ENCODE measurements at regions of chr11 and their contacts with region 1.

Region 1: DNA sequence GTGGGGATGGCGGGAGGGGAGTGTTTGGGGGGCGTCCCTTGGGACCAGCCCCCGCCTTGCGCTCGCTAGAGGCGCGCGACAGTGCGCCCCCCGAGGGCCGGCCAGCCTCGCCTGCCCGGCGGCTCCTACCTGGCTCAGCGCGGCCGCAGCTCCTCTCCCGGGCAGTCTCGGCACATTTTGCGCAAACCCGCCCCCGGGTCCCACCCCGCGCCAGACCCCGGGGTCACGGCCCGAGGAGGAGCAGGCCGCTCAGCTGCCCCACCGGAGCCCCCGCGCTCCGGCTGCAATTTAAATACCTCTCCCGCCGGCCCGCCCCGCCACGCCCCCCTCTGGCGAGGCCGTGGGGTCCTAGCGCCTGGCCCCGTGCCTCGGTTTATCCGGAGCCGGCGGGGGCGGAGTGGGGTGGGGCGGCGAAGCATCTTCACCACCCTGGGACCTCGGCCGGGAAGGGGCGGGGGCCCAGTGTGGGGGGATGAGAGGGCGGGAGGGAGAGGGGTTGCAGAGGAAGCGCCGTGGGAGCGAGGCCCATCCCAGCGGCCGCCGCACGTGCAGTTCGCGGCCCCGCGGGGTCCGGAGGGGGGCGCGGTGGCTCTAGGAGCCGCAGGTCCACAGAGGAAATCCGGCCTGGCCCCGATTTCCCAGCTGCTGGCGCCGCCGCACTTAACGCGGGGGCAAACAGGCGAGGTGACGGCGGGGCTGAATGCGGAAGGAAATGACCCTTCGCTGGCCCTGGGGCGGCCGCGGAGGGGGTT is at the start of gene LRRC32:
- DNase-seq: no peak
- H3K4me3 ChIP-seq: peak within 1 kb of the TSS; percentile 59 to 74 (median 64)
- H3K27ac ChIP-seq: peak within 1 kb of the TSS; percentile 62 to 83 (median 79)
- H3K4me1 ChIP-seq: peaks cover 36 to 58% (median 48%) of the 10 kb centered on the region in 4 donors
- H3K27me3 ChIP-seq: peaks cover 0 to 30% (median 4%) of the 10 kb centered on the region in 4 donors
- CTCF ChIP-seq: peak in 1 of 3 experiments; percentile 17
- EP300 ChIP-seq: no peak
- POLR2A ChIP-seq: no peak
- total RNA-seq, gene LRRC32: 19.1 to 87.5 (median 45.3) TPM

Region 2: GRCh38 chr11:76602431-76602861 is 68.2 kb before region 1 on chr11:
- intact Hi-C with region 1: loop called (anchors 10 kb)
- DNase-seq: peak; percentile 92
- H3K4me3 ChIP-seq: no peak overlapping the region
- H3K27ac ChIP-seq: peak overlapping the region; percentile 41 to 62 (median 52)
- H3K4me1 ChIP-seq: peaks cover 48 to 54% (median 50%) of the 10 kb centered on the region in 4 donors
- H3K27me3 ChIP-seq: no peaks in the 10 kb centered on the region
- CTCF ChIP-seq: no peak
- EP300 ChIP-seq: no peak
- POLR2A ChIP-seq: no peak

Region 3: DNA sequence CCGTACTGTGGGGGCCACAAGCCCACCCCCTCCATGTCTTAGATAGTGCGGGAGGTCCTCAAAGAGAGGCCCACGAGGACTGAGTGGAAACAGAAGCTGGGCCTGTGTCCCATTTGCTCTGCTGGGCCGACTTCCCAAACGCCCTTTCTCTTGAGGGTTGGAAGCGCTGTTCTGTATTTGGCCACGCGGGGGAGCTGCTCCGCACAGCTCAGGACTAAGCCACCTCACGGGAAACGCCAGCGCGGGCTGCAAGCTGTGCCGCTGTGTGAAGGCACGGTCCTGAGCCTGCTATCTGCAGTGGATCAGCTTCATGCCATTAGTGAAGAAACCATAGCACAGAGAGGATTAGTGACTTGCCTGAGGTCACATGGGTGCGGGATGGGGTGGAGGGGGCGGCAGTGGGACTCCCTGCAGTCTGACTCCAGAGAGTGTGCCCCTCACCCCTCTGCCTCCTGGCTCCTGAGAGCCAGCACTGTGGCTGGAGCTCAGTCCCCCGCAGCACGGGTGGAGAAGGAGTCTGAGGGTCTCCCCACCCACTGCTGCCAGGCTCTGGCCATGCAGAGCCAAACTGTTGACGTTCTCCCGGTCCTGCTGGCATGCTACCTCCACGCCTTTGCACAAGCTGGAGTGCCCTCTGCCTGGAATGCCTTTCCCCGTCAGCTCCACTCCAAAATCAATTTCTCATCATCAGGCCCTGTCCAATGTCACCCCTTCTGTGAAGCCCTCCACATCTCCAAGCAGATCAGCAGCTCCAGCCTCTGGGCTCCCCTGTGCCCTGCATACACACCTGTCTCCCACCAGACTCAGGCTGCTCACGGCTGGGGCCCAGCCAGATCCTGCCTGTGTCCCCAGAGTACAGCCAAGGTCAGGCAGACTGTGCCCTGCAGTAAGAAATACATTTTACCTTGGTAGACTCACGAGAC is 51.4 kb after region 1 on chr11:
- intact Hi-C with region 1: no loop called
- DNase-seq: peak; percentile 97
- H3K4me3 ChIP-seq: peak overlapping the region in 3 of 4 donors; percentile 17 to 29 (median 24)
- H3K27ac ChIP-seq: no peak overlapping the region
- H3K4me1 ChIP-seq: peaks cover 7 to 12% (median 10%) of the 10 kb centered on the region in 4 donors
- H3K27me3 ChIP-seq: peaks cover 0 to 28% (median 0%) of the 10 kb centered on the region in 4 donors
- CTCF ChIP-seq: peak; percentile 81 to 97 (median 84)
- EP300 ChIP-seq: no peak
- POLR2A ChIP-seq: no peak

Region 4: DNA sequence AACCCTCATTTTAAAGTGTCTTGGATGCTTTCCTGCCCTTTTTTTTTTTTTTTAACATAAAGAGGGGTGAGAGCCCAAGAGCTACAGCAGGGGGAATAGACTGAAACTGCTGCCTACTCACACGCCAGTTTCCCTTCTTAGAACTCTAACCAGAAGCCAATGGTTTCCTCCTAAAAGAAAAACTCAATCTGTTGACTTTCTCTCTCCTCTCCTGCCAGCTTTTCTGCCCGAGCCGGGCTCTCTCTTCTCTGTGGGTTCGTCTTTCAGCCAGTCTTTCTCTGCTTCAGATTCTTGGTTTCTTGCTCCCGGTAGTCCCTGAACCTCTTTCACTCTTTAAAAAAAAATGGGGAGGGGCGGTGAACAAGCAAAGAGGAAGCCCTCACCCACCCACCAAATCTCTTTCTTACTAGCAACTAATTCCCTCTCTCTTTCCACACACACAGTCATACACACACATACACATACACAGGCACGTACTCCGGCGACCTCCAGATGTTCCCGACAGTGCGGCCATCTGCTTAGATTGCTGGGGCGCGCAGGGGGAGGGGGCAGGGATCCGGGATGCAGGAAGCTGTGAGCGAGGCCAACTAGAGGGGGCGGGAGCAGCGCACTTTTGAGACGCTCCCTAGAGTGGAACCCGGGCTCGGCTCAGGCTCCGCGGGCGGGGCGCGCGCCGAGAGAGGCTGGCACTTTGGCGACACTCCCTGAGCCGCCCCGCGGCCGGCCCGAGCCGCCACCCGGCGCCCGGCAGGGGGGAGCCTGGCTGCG is 112.0 kb after region 1 on chr11:
- intact Hi-C with region 1: no loop called
- DNase-seq: peak; percentile 98
- H3K4me3 ChIP-seq: peak overlapping the region; percentile 81 to 92 (median 82)
- H3K27ac ChIP-seq: peak overlapping the region; percentile 86 to 94 (median 89)
- H3K4me1 ChIP-seq: peaks cover 19 to 62% (median 52%) of the 10 kb centered on the region in 4 donors
- H3K27me3 ChIP-seq: no peaks in the 10 kb centered on the region
- CTCF ChIP-seq: no peak
- EP300 ChIP-seq: no peak
- POLR2A ChIP-seq: peak; percentile 26

Region 5: GRCh38 chr11:77047007-77047927 is 376.6 kb after region 1 on chr11:
- intact Hi-C with region 1: no loop called
- DNase-seq: no peak
- H3K4me3 ChIP-seq: peak overlapping the region; percentile 39 to 51 (median 45)
- H3K27ac ChIP-seq: peak overlapping the region in 1 of 4 donors; percentile 54
- H3K4me1 ChIP-seq: peaks cover 0 to 13% (median 11%) of the 10 kb centered on the region in 4 donors
- H3K27me3 ChIP-seq: peaks cover 0 to 33% (median 11%) of the 10 kb centered on the region in 4 donors
- CTCF ChIP-seq: peak; percentile 73 to 81 (median 75)
- EP300 ChIP-seq: no peak
- POLR2A ChIP-seq: no peak

Measured in esophagus muscularis mucosa (tissue), 4 donors.